ENCODE measurements at regions of chr2 and their contacts with region 1.

Region 1: DNA sequence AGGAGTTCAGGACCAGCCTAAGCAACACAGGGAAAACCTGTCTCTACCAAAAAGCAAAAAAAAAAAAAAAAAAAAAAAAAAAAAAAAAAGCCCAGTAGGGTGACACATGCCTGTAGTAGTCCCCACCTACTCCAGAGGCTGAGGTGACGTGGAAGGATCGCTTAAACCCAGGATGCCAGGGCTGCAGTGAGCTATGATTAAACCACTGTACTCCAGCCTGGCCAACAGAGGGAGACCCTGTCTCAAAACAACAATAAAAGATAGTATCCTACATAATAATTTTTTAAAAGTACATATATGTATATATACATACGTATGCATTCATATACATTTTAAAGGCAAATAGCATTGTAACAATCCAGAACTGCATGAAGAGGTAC is 51.7 kb downstream of the SOS1 start:
- DNase-seq: no peak
- H3K4me3 ChIP-seq: no peak overlapping the region
- H3K27ac ChIP-seq: no peak overlapping the region
- H3K4me1 ChIP-seq: peaks cover 0 to 7% of the 10 kb centered on the region in 2 donors
- H3K27me3 ChIP-seq: no peaks in the 10 kb centered on the region
- CTCF ChIP-seq: no peak
- POLR2A ChIP-seq: no peak

Region 2: DNA sequence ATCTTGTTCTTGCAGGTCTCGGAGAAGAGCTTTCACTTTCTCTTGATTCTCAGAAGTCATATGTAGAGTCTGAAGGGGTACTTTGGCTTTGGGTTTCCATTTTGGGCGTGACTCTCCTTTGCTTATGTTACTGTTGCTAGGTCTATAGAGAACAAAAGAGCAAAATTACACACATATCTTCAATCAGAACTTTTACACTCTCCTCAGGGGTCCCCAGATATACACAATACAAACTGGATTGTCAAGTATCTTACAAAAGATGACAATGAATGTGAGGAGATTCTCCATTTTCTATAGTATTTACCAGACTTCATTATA is 205.8 kb before region 1 on chr2:
- intact Hi-C with region 1: no loop called
- DNase-seq: no peak
- H3K4me3 ChIP-seq: no peak overlapping the region
- H3K27ac ChIP-seq: no peak overlapping the region
- H3K4me1 ChIP-seq: no peaks in the 10 kb centered on the region
- H3K27me3 ChIP-seq: no peaks in the 10 kb centered on the region
- CTCF ChIP-seq: no peak
- POLR2A ChIP-seq: no peak

Region 3: DNA sequence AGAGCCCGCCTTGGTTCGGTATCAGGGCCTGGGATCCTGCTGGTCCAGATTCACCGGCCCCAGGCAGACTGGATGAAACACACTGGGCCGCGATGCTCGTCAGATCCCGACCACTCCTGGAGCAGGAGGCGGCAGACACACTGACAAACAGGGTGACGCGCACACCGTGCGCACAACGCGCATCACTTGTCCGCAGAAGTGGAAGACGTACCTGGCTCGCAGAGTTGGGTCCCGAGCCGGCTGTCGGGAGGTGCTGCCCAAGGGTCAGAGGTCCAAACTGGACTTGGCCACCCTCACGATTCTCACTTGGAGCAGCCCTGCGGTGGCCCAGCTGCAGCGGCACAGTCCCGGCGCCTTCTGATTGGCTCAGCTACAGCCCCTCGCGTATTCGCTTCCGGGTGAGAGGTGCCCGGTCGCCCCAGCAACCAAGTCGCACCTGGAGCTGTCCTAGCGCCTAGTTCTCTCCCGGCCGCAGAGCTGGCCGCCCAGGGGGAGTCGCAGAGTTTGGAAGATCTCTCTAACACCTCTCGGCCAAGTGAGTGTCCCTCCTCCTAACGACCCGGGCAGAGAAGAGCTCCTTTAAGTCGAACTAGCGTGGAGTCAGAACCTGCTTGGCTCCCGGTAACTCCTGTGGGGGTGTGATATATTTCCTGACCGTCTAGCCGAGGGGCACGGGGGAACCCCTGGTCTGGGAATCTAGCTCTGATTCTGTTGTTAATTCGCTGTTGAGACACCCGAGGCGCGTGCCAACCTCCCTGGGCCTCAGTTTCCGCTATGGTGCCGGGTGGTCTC is 193.4 kb before region 1 on chr2 and contains the starts of genes DHX57 and MORN2:
- intact Hi-C with region 1: no loop called
- DNase-seq: peak; percentile 87 to 97 (median 92)
- H3K4me3 ChIP-seq: peak within 1 kb of the TSS; percentile 29 to 92 (median 82)
- H3K27ac ChIP-seq: peak within 1 kb of the TSS in 4 of 5 donors; percentile 57 to 85 (median 66)
- H3K4me1 ChIP-seq: peaks cover 0 to 14% of the 10 kb centered on the region in 2 donors
- H3K27me3 ChIP-seq: no peaks in the 10 kb centered on the region
- CTCF ChIP-seq: no peak
- POLR2A ChIP-seq: peak in 1 of 2 donors; percentile 43
- total RNA-seq, gene DHX57: 9.4 to 30.5 (median 17.1) TPM
- total RNA-seq, gene MORN2: 17.0 to 35.9 (median 22.0) TPM

Region 4: GRCh38 chr2:39124000-39124745 is 55.0 kb after region 1 on chr2:
- intact Hi-C with region 1: loop called in 1 of 2 experiments (anchors 10 kb)
- DNase-seq: peak; percentile 93 to 96 (median 94)
- H3K4me3 ChIP-seq: peak overlapping the region; percentile 40 to 94 (median 58)
- H3K27ac ChIP-seq: peak overlapping the region; percentile 33 to 94 (median 87)
- H3K4me1 ChIP-seq: peaks cover 13 to 30% of the 10 kb centered on the region in 2 donors
- H3K27me3 ChIP-seq: no peaks in the 10 kb centered on the region
- CTCF ChIP-seq: peak in 5 of 6 experiments; percentile 13 to 44 (median 38)
- POLR2A ChIP-seq: peak; percentile 53 to 63

Region 5: GRCh38 chr2:39642051-39642742 is 573.1 kb after region 1 on chr2:
- intact Hi-C with region 1: no loop called
- DNase-seq: peak in 1 of 7 donors; percentile 14
- H3K4me3 ChIP-seq: no peak overlapping the region
- H3K27ac ChIP-seq: no peak overlapping the region
- H3K4me1 ChIP-seq: peaks cover 0 to 3% of the 10 kb centered on the region in 2 donors
- H3K27me3 ChIP-seq: no peaks in the 10 kb centered on the region
- CTCF ChIP-seq: no peak
- POLR2A ChIP-seq: no peak

Measured in adrenal gland (tissue), 19 donors.